ENCODE measurements at regions of chr1 and their contacts with region 1.

Region 1: DNA sequence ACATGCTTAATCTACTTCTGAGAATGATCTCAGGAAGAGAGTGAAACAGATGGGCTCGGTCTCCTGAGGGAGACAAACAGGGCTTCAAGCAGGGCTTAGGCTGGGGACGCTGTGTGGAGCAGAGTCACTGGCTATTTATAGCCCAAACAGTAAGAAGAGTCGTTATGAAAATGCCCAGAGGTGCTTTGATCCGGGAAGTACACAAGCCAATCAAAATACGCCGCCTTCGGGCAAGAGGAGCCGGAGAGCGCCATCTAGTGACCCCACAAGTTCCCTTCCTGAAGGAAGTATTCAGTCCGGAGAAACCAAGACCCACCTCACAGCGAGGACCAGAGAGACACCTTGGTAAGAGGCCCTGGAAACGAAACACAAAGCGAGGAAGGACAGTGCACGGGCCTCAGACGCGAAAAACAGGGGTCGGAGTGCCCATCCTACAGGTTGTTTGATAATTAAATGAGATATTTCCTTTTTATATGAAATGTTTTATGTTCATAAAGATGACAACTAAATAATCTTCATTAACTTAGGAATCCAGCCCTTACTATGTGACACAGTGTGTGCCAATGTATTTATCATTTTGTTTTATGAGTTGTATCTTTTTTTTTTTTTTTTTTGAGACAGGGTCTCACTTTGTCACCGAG is 25.0 kb upstream of the SCCPDH start:
- DNase-seq: peak; percentile 89 to 92 (median 92)
- ATAC-seq: peak; percentile 87
- H3K4me3 ChIP-seq: no peak overlapping the region
- H3K27ac ChIP-seq: peak overlapping the region in 2 of 4 donors; percentile 16 to 49
- H3K4me1 ChIP-seq: peaks cover 20% of the 10 kb centered on the region
- H3K27me3 ChIP-seq: no peaks in the 10 kb centered on the region
- CTCF ChIP-seq: peak; percentile 53 to 89 (median 87)
- POLR2A ChIP-seq: no peak

Region 2: GRCh38 chr1:246506674-246507481 is 192.3 kb before region 1 on chr1 and contains the start of gene SMYD3:
- intact Hi-C with region 1: loop called (anchors 5 kb)
- DNase-seq: peak; percentile 72 to 82 (median 77)
- ATAC-seq: peak; percentile 96
- H3K4me3 ChIP-seq: peak within 1 kb of the TSS; percentile 80 to 98
- H3K27ac ChIP-seq: peak within 1 kb of the TSS in 3 of 4 donors; percentile 48 to 64 (median 55)
- H3K4me1 ChIP-seq: peaks cover 12% of the 10 kb centered on the region
- H3K27me3 ChIP-seq: no peaks in the 10 kb centered on the region
- CTCF ChIP-seq: peak in 2 of 7 experiments; percentile 7 to 27
- POLR2A ChIP-seq: peak in 2 of 3 donors; percentile 46 to 56
- total RNA-seq, gene SMYD3: 13.5 to 20.8 TPM

Region 3: DNA sequence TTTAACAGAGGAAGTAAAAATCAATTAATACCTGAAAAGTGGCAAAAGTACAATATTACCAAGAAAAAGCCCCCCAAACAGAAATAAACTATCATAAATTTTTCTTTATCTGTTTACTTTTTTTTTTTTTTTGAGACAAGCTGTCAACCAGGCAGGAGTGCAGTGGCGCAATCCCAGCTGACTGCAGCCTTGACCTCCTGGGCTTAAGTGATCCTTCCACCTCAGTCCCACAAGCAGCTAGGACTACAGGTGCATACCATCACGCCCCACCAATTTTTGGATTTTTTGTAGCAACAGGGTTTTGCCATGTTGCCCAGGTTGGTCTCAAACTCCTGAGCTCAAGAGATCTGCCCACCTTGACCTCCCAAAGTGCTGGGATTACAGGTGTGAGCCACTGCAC is 141.2 kb before region 1 on chr1:
- intact Hi-C with region 1: no loop called
- DNase-seq: no peak
- ATAC-seq: no peak
- H3K4me3 ChIP-seq: no peak overlapping the region
- H3K27ac ChIP-seq: no peak overlapping the region
- H3K4me1 ChIP-seq: no peaks in the 10 kb centered on the region
- H3K27me3 ChIP-seq: no peaks in the 10 kb centered on the region
- CTCF ChIP-seq: no peak
- POLR2A ChIP-seq: no peak

Region 4: GRCh38 chr1:247070645-247071044 is 371.4 kb after region 1 on chr1:
- intact Hi-C with region 1: no loop called
- DNase-seq: no peak
- ATAC-seq: no peak
- H3K4me3 ChIP-seq: no peak overlapping the region
- H3K27ac ChIP-seq: no peak overlapping the region
- H3K4me1 ChIP-seq: no peaks in the 10 kb centered on the region
- H3K27me3 ChIP-seq: no peaks in the 10 kb centered on the region
- CTCF ChIP-seq: no peak
- POLR2A ChIP-seq: no peak

Region 5: GRCh38 chr1:247182994-247183393 is 483.8 kb after region 1 on chr1:
- intact Hi-C with region 1: no loop called
- DNase-seq: no peak
- ATAC-seq: no peak
- H3K4me3 ChIP-seq: no peak overlapping the region
- H3K27ac ChIP-seq: no peak overlapping the region
- H3K4me1 ChIP-seq: no peaks in the 10 kb centered on the region
- H3K27me3 ChIP-seq: no peaks in the 10 kb centered on the region
- CTCF ChIP-seq: no peak
- POLR2A ChIP-seq: no peak

Measured in body of pancreas (tissue), 4 donors.